Esophagus muscularis mucosa (tissue), 4 donors: ENCODE measurements at regions of chr12 and their contacts with region 1.

Region 1: DNA sequence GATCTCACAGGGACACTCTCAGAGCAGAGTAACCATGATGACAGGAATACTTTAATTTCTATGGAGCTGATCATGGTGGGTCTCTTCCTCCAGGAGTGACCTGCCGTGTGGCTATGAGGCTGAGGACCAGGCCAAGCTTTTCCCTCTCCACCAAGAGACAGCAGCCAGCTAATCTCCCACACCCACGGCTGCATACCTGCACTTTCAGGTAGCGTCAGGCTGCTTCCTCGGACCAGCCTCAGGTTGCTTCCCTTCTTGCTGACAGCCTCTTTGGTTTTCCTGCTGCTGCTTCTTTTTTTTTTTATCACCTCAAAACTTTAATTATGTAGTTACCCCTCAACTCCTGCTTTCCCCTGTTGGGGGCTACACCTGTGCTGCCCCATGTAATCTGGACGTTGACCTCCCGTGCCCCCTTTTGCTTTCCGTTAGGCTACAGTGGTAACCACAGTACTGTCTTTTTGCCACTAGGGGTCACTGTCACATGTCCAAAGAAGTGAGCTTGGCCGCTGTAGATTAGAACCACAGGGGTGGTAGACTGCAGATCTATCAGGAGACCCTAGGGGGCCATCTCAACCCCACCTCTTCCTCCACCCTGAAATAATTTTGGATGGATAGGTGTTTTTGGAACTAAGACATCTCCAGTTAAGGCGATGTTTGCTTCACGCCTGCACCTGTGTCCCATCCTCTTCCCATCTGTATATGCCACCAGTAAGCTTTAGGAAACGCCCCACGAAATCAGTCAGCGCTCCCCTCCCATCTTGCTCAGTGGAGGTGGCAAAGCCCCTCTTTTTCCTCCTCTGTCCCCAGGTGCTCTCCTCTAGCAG is 7.8 kb upstream of the PIP4K2C start:
- DNase-seq: no peak
- H3K4me3 ChIP-seq: no peak overlapping the region
- H3K27ac ChIP-seq: no peak overlapping the region
- H3K4me1 ChIP-seq: peaks cover 0 to 7% (median 2%) of the 10 kb centered on the region in 4 donors
- H3K27me3 ChIP-seq: peaks cover 0 to 6% (median 0%) of the 10 kb centered on the region in 4 donors
- CTCF ChIP-seq: peak; percentile 91 to 97 (median 94)
- EP300 ChIP-seq: no peak
- POLR2A ChIP-seq: no peak

Region 2: DNA sequence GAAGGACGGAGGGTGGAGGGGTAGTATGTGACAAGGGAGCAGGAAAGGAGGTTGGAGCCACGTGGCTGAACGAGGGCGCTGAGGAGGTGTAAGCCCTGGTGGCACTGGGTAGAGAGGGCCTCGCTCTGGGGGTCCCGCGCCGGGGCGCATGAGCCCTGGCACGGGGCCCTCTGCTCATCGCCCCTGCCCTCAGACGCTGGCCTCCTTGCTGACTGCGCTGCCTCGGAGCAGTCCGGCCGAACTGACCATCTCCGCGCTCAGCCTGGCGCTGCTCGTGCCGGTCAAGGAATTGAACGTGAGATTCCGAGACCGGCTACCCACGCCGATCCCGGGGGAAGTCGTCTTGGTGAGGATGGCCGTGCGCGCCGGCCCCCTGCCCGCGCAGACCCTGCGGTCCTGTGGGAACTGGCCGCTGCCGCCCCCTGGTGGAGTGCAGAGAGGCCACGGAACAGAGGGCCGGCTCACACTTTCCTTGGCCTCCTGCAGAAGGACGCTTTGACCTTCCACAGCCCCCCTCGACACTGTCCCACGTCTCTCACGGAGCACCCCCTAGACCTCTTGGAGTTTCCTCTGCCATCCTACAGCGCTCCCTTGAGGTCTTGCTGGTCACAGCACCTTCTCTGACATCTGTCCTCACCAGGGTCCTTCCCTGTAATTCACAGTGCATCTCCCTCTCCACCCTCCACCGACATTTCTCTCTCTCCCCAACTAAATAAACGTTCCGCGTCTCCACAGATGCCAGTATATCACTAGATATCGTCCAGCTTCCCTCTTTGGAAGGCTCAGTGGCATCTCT is 38.5 kb after region 1 on chr12:
- intact Hi-C with region 1: loop called (anchors 1 kb)
- DNase-seq: no peak
- H3K4me3 ChIP-seq: peak overlapping the region; percentile 43 to 59 (median 49)
- H3K27ac ChIP-seq: no peak overlapping the region
- H3K4me1 ChIP-seq: peaks cover 20 to 42% (median 28%) of the 10 kb centered on the region in 4 donors
- H3K27me3 ChIP-seq: peaks cover 0 to 44% (median 4%) of the 10 kb centered on the region in 4 donors
- CTCF ChIP-seq: peak; percentile 91 to 94 (median 93)
- EP300 ChIP-seq: no peak
- POLR2A ChIP-seq: no peak

Region 3: GRCh38 chr12:57693659-57694458 is 110.6 kb after region 1 on chr12 and contains the start of gene OS9:
- intact Hi-C with region 1: loop called (anchors 5 kb)
- DNase-seq: peak; percentile 99
- H3K4me3 ChIP-seq: peak within 1 kb of the TSS; percentile 72 to 89 (median 84)
- H3K27ac ChIP-seq: peak within 1 kb of the TSS; percentile 72 to 85 (median 77)
- H3K4me1 ChIP-seq: peaks cover 12 to 21% (median 18%) of the 10 kb centered on the region in 4 donors
- H3K27me3 ChIP-seq: no peaks in the 10 kb centered on the region
- CTCF ChIP-seq: peak; percentile 66 to 89 (median 79)
- EP300 ChIP-seq: no peak
- POLR2A ChIP-seq: peak; percentile 50
- total RNA-seq, gene OS9: 139 to 223 (median 148) TPM

Region 4: DNA sequence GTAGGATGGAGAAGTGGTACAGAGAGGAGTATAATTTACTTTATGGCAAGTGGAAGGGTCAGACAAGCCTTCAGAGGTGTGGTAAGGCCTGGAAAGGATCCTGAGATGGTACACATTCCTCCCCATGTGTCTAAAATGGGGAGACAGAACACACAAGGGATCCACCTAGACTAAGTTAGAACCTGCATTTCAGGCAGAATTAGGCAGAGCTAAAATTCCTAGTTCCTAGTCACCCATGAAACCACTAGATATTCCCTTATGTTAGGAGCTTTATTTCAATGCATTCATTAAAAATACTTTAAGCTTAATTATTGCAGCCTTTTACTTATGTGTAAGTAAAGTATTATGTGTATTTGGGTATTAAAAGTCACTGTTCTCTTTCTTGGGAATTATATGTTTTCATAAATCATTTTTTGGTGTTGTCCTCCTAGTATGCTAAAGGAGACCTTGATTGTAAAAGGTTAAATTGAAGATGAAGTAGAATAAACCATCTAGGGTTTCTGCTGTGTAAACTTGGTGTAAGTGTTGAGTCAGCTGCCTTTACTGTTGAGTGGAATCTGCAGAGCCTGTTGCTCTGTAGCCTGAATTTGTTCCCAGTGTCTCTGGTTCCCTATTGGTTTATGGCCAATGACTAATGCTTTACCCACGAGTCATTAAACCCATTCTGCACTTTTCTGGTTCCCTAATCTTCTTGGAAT is 781.3 kb after region 1 on chr12:
- intact Hi-C with region 1: no loop called
- DNase-seq: no peak
- H3K4me3 ChIP-seq: no peak overlapping the region
- H3K27ac ChIP-seq: no peak overlapping the region
- H3K4me1 ChIP-seq: no peaks in the 10 kb centered on the region
- H3K27me3 ChIP-seq: no peaks in the 10 kb centered on the region
- CTCF ChIP-seq: no peak
- EP300 ChIP-seq: no peak
- POLR2A ChIP-seq: no peak

Region 5: DNA sequence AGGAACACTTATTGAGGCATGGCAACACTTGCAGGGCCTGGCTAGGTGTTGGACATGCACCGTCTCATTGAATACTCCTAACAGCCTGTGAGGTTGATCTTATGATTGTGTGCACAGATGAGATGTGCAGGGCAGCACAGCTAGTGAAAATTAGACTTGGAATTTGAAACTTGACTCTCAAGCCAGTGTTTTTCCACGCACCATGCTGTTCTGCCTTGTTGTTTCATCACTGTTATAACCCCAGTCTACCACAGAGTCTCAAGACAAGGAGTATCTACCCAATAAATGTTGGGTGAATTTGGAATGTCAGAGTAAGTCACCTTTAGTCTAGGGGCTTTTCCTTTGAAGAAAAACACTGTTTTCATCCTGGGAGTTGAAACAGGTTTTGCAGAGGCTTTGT is 1392.9 kb after region 1 on chr12:
- intact Hi-C with region 1: no loop called
- DNase-seq: no peak
- H3K4me3 ChIP-seq: no peak overlapping the region
- H3K27ac ChIP-seq: no peak overlapping the region
- H3K4me1 ChIP-seq: no peaks in the 10 kb centered on the region
- H3K27me3 ChIP-seq: no peaks in the 10 kb centered on the region
- CTCF ChIP-seq: no peak
- EP300 ChIP-seq: no peak
- POLR2A ChIP-seq: no peak